ENCODE measurements at regions of chr12 and their contacts with region 1.

Region 1: GRCh38 chr12:65740873-65741600 is 83.2 kb upstream of the HMGA2 start:
- DNase-seq: peak; percentile 70
- H3K4me3 Mint-ChIP-seq: peak overlapping the region; percentile 72
- H3K27ac Mint-ChIP-seq: peak overlapping the region; percentile 1
- H3K4me1 Mint-ChIP-seq: peaks cover 13% of the 10 kb centered on the region
- H3K27me3 Mint-ChIP-seq: peaks cover 36% of the 10 kb centered on the region

Region 2: GRCh38 chr12:65756956-65757511 is 16.0 kb after region 1 on chr12:
- intact Hi-C with region 1: loop called (anchors 2 kb)
- DNase-seq: no peak
- H3K4me3 Mint-ChIP-seq: no peak overlapping the region
- H3K27ac Mint-ChIP-seq: peak overlapping the region; percentile 73
- H3K4me1 Mint-ChIP-seq: peaks cover 22% of the 10 kb centered on the region
- H3K27me3 Mint-ChIP-seq: peaks cover 49% of the 10 kb centered on the region

Region 3: GRCh38 chr12:65911321-65911720 is 170.3 kb after region 1 on chr12:
- intact Hi-C with region 1: no loop called
- DNase-seq: no peak
- H3K4me3 Mint-ChIP-seq: no peak overlapping the region
- H3K27ac Mint-ChIP-seq: no peak overlapping the region
- H3K4me1 Mint-ChIP-seq: no peaks in the 10 kb centered on the region
- H3K27me3 Mint-ChIP-seq: peaks cover 16% of the 10 kb centered on the region